A673 (cell line): ENCODE measurements at regions of chr5 and their contacts with region 1.

Region 1: DNA sequence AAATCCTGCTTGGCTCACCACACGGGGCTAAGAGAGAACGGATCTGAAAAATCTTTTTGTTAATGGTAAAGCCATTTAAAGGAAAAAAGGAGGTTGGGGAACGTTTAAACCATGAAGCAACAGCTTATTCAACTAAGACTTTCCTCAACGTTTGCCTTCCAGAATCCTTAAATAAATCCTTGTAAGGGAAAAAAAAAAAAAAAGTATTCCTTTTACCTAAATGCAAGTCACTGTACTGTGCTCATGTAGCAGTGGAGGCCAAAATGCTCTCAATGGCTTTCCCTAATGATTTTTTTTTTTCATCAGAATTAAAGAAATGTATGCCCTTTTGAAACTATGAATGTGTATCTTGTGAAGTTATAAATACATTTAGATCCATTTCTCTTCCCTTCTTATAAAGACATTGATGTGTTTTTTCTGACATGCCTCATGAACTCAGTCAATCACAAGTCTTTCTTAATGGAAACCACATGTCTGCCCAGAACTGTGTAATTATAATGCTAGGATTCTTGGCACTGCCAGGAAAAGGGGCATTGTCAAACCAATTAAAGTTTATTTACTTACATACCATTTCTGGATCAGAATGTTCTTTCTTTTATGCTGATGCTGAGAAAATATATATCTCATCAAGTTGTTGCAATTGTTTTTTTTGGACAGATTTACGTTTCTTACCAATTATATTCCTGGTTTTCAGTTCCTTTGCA is 107.5 kb downstream of the EBF1 start:
- DNase-seq: peak; percentile 71
- H3K4me3 ChIP-seq: no peak overlapping the region
- H3K27ac ChIP-seq: peak overlapping the region; percentile 48
- H3K4me1 ChIP-seq: peaks cover 12% of the 10 kb centered on the region
- H3K27me3 ChIP-seq: no peaks in the 10 kb centered on the region
- CTCF ChIP-seq: no peak

Region 2: GRCh38 chr5:158951436-158952247 is 40.5 kb before region 1 on chr5:
- CTCF ChIA-PET with region 1: no interaction called
- POLR2A ChIA-PET with region 1: no interaction called
- intact Hi-C with region 1: no loop called
- DNase-seq: no peak
- H3K4me3 ChIP-seq: no peak overlapping the region
- H3K27ac ChIP-seq: no peak overlapping the region
- H3K4me1 ChIP-seq: peaks cover 7% of the 10 kb centered on the region
- H3K27me3 ChIP-seq: no peaks in the 10 kb centered on the region
- CTCF ChIP-seq: no peak

Region 3: GRCh38 chr5:159021901-159022556 is 29.8 kb after region 1 on chr5:
- CTCF ChIA-PET with region 1: no interaction called
- POLR2A ChIA-PET with region 1: no interaction called
- intact Hi-C with region 1: loop called (anchors 1 kb)
- DNase-seq: peak; percentile 56
- H3K4me3 ChIP-seq: no peak overlapping the region
- H3K27ac ChIP-seq: peak overlapping the region; percentile 51
- H3K4me1 ChIP-seq: peaks cover 47% of the 10 kb centered on the region
- H3K27me3 ChIP-seq: no peaks in the 10 kb centered on the region
- CTCF ChIP-seq: no peak